CD8-positive, alpha-beta T cell (primary cell): ENCODE measurements at regions of chr1 and their contacts with region 1.

Region 1: DNA sequence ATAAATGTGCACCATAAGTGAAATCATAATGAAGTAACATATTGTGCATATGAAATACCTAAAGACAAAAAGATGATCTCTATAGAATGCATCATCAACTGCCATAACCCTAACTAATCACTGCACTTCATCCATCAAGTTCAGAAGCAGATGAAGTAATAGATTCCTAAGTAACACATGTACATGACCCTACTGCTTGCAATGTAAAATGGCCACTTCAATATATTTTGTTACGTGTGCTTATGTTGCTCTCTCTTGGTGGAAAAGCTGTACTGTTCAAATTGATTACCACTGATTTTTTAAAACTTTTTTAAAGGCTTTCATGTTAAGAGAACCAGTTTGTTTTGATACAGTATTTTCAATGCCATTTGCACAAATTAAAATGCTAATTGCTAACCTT is 141.8 kb downstream of the TTLL7 start:
- DNase-seq: peak in 1 of 9 experiments; percentile 25
- ATAC-seq: no peak
- H3K4me3 ChIP-seq: no peak overlapping the region
- H3K4me3 Mint-ChIP-seq: no peak overlapping the region
- H3K27ac ChIP-seq: no peak overlapping the region
- H3K27ac Mint-ChIP-seq: no peak overlapping the region
- H3K4me1 ChIP-seq: no peaks in the 10 kb centered on the region
- H3K4me1 Mint-ChIP-seq: peaks cover 16% of the 10 kb centered on the region
- H3K27me3 ChIP-seq: no peaks in the 10 kb centered on the region
- H3K27me3 Mint-ChIP-seq: no peaks in the 10 kb centered on the region
- CTCF ChIP-seq: no peak

Region 2: DNA sequence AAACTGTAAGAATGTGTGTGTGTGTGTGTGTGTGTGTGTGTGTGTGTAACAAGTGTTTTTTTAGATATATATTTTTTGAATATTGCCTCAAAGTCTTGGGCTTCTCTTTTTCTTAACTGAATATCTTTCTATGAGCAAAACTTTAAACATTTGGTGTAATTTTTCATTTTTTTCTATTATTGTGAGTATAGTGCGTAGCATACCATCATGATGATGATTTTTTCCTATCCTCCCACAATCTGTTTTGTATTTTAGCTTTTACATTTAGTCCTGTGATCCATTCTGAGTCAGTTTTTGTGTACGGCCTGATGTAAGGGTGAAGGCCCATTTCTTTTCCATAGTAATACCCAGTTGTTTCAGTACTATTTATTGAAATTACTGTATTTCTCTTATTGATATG is 538.7 kb before region 1 on chr1:
- CTCF ChIA-PET with region 1: no interaction called
- POLR2A ChIA-PET with region 1: no interaction called
- intact Hi-C with region 1: loop called in 1 of 2 experiments (anchors 10 kb)
- DNase-seq: no peak
- ATAC-seq: no peak
- H3K4me3 ChIP-seq: no peak overlapping the region
- H3K4me3 Mint-ChIP-seq: no peak overlapping the region
- H3K27ac ChIP-seq: no peak overlapping the region
- H3K27ac Mint-ChIP-seq: no peak overlapping the region
- H3K4me1 ChIP-seq: no peaks in the 10 kb centered on the region
- H3K4me1 Mint-ChIP-seq: no peaks in the 10 kb centered on the region
- H3K27me3 ChIP-seq: no peaks in the 10 kb centered on the region
- H3K27me3 Mint-ChIP-seq: no peaks in the 10 kb centered on the region
- CTCF ChIP-seq: no peak

Region 3: GRCh38 chr1:83815330-83815729 is 41.8 kb before region 1 on chr1:
- CTCF ChIA-PET with region 1: no interaction called
- POLR2A ChIA-PET with region 1: no interaction called
- intact Hi-C with region 1: no loop called
- DNase-seq: no peak
- ATAC-seq: no peak
- H3K4me3 ChIP-seq: no peak overlapping the region
- H3K4me3 Mint-ChIP-seq: no peak overlapping the region
- H3K27ac ChIP-seq: no peak overlapping the region
- H3K27ac Mint-ChIP-seq: no peak overlapping the region
- H3K4me1 ChIP-seq: no peaks in the 10 kb centered on the region
- H3K4me1 Mint-ChIP-seq: no peaks in the 10 kb centered on the region
- H3K27me3 ChIP-seq: no peaks in the 10 kb centered on the region
- H3K27me3 Mint-ChIP-seq: no peaks in the 10 kb centered on the region
- CTCF ChIP-seq: no peak

Region 4: GRCh38 chr1:83839566-83840173 is 17.4 kb before region 1 on chr1:
- CTCF ChIA-PET with region 1: no interaction called
- POLR2A ChIA-PET with region 1: no interaction called
- intact Hi-C with region 1: no loop called
- DNase-seq: no peak
- ATAC-seq: no peak
- H3K4me3 ChIP-seq: no peak overlapping the region
- H3K4me3 Mint-ChIP-seq: no peak overlapping the region
- H3K27ac ChIP-seq: no peak overlapping the region
- H3K27ac Mint-ChIP-seq: no peak overlapping the region
- H3K4me1 ChIP-seq: no peaks in the 10 kb centered on the region
- H3K4me1 Mint-ChIP-seq: no peaks in the 10 kb centered on the region
- H3K27me3 ChIP-seq: no peaks in the 10 kb centered on the region
- H3K27me3 Mint-ChIP-seq: no peaks in the 10 kb centered on the region
- CTCF ChIP-seq: no peak